ENCODE measurements at regions of chr1 and their contacts with region 1.

Region 1: GRCh38 chr1:101145449-101145820 is 91.4 kb upstream of the S1PR1 start:
- DNase-seq: no peak
- ATAC-seq: no peak
- H3K4me3 ChIP-seq: peak overlapping the region in 1 of 5 experiments; percentile 28
- H3K4me3 Mint-ChIP-seq: peak overlapping the region; percentile 76
- H3K27ac ChIP-seq: peak overlapping the region; percentile 51 to 64
- H3K27ac Mint-ChIP-seq: peak overlapping the region; percentile 83
- H3K4me1 ChIP-seq: peaks cover 12% of the 10 kb centered on the region in 2 donors
- H3K4me1 Mint-ChIP-seq: peaks cover 15% of the 10 kb centered on the region
- H3K27me3 ChIP-seq: no peaks in the 10 kb centered on the region
- H3K27me3 Mint-ChIP-seq: no peaks in the 10 kb centered on the region
- CTCF ChIP-seq: no peak

Region 2: DNA sequence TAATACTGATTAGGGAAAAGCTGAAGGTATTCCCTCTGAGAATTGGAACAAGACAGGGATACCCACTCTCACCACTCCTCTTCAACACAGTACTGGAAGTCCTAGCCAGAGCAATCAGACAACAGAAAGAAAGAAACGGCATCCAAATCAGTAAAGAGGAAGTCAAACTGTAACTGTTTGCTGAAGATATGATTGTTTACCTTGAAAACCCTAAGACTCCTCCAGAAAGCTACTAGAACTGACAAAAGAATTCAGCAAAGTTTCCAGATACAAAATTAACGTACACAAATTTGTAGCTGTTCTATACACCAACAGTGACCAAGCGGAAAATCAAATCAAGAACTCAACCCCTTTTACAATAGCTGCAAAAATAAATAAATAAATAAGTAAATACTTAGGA is 329.4 kb before region 1 on chr1:
- CTCF ChIA-PET with region 1: no interaction called
- POLR2A ChIA-PET with region 1: no interaction called
- intact Hi-C with region 1: no loop called
- DNase-seq: no peak
- ATAC-seq: no peak
- H3K4me3 ChIP-seq: no peak overlapping the region
- H3K4me3 Mint-ChIP-seq: no peak overlapping the region
- H3K27ac ChIP-seq: no peak overlapping the region
- H3K27ac Mint-ChIP-seq: no peak overlapping the region
- H3K4me1 ChIP-seq: no peaks in the 10 kb centered on the region
- H3K4me1 Mint-ChIP-seq: peaks cover 12% of the 10 kb centered on the region
- H3K27me3 ChIP-seq: peaks cover 0 to 5% (median 1%) of the 10 kb centered on the region in 4 experiments
- H3K27me3 Mint-ChIP-seq: peaks cover 8% of the 10 kb centered on the region
- CTCF ChIP-seq: no peak

Region 3: GRCh38 chr1:101181930-101182329 is 36.5 kb after region 1 on chr1:
- CTCF ChIA-PET with region 1: no interaction called
- POLR2A ChIA-PET with region 1: no interaction called
- intact Hi-C with region 1: loop called (anchors 5 kb)
- DNase-seq: no peak
- ATAC-seq: no peak
- H3K4me3 ChIP-seq: no peak overlapping the region
- H3K4me3 Mint-ChIP-seq: no peak overlapping the region
- H3K27ac ChIP-seq: no peak overlapping the region
- H3K27ac Mint-ChIP-seq: no peak overlapping the region
- H3K4me1 ChIP-seq: peaks cover 8 to 16% of the 10 kb centered on the region in 2 donors
- H3K4me1 Mint-ChIP-seq: peaks cover 16% of the 10 kb centered on the region
- H3K27me3 ChIP-seq: no peaks in the 10 kb centered on the region
- H3K27me3 Mint-ChIP-seq: no peaks in the 10 kb centered on the region
- CTCF ChIP-seq: no peak